CD4-positive, alpha-beta T cell (primary cell): ENCODE measurements at regions of chr10 and their contacts with region 1.

Region 1: GRCh38 chr10:43396928-43397624 is 11.9 kb downstream of the HNRNPF start:
- DNase-seq: peak; percentile 49 to 90 (median 64)
- ATAC-seq: peak; percentile 54
- H3K4me3 ChIP-seq: peak overlapping the region; percentile 67
- H3K4me3 Mint-ChIP-seq: peak overlapping the region; percentile 94
- H3K27ac ChIP-seq: peak overlapping the region; percentile 92 to 94
- H3K27ac Mint-ChIP-seq: peak overlapping the region; percentile 93
- H3K4me1 ChIP-seq: peaks cover 82% of the 10 kb centered on the region
- H3K4me1 Mint-ChIP-seq: peaks cover 86% of the 10 kb centered on the region
- H3K27me3 ChIP-seq: no peaks in the 10 kb centered on the region
- H3K27me3 Mint-ChIP-seq: no peaks in the 10 kb centered on the region
- CTCF ChIP-seq: no peak

Region 2: GRCh38 chr10:43361986-43362839 is 34.9 kb before region 1 on chr10:
- CTCF ChIA-PET with region 1: no interaction called
- POLR2A ChIA-PET with region 1: interaction called, 4 read pairs
- intact Hi-C with region 1: loop called (anchors 2 to 5 kb)
- DNase-seq: peak; percentile 93 to 99 (median 98)
- ATAC-seq: peak; percentile 98
- H3K4me3 ChIP-seq: peak overlapping the region; percentile 82
- H3K4me3 Mint-ChIP-seq: peak overlapping the region; percentile 97
- H3K27ac ChIP-seq: peak overlapping the region; percentile 88 to 97
- H3K27ac Mint-ChIP-seq: peak overlapping the region; percentile 97
- H3K4me1 ChIP-seq: peaks cover 22% of the 10 kb centered on the region
- H3K4me1 Mint-ChIP-seq: peaks cover 32% of the 10 kb centered on the region
- H3K27me3 ChIP-seq: no peaks in the 10 kb centered on the region
- H3K27me3 Mint-ChIP-seq: no peaks in the 10 kb centered on the region
- CTCF ChIP-seq: peak; percentile 64